GM10248 (cell line): ENCODE measurements at regions of chr20 and their contacts with region 1.

Region 1: GRCh38 chr20:37564388-37565133 is 36.9 kb upstream of the BLCAP start:
- DNase-seq: peak; percentile 83
- CTCF ChIP-seq: peak; percentile 96

Region 2: GRCh38 chr20:37575884-37576283 is 11.3 kb after region 1 on chr20:
- CTCF ChIA-PET with region 1: interaction called, 24 read pairs
- POLR2A ChIA-PET with region 1: no interaction called
- DNase-seq: peak; percentile 60
- CTCF ChIP-seq: no peak

Region 3: GRCh38 chr20:37990571-37991151 is 426.1 kb after region 1 on chr20:
- CTCF ChIA-PET with region 1: interaction called, 54 read pairs
- POLR2A ChIA-PET with region 1: no interaction called
- DNase-seq: peak; percentile 86
- CTCF ChIP-seq: no peak